PC-3 (cell line): ENCODE measurements at regions of chr21 and their contacts with region 1.

Region 1: DNA sequence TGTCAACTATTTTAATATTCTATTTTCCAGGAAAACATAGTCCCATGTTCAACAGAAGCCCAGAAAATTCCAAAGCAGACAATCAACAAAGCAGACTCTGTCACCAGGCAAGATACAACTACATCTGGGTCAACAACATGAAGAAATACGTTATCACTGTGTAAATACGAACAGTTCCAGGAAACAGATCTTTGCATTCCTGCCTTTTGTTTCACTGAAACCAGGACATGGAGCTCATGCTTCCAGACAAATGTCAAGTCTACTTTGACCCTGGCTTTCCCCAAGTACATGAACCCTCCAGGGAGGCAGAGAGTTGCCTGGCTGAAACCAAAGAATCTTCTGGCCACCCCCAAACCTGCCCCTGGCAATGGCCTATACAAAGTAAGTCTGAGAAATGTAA is 106.7 kb downstream of the SETD4 start:
- DNase-seq: peak; percentile 50
- ATAC-seq: peak; percentile 64
- H3K4me3 ChIP-seq: no peak overlapping the region
- H3K27ac ChIP-seq: no peak overlapping the region
- H3K4me1 ChIP-seq: peaks cover 6% of the 10 kb centered on the region; the same call in 1 of the 2 replicates
- H3K27me3 ChIP-seq: no peaks in the 10 kb centered on the region
- CTCF ChIP-seq: no peak

Region 2: GRCh38 chr21:35814858-35815619 is 138.6 kb before region 1 on chr21:
- CTCF ChIA-PET with region 1: no interaction called
- POLR2A ChIA-PET with region 1: no interaction called
- intact Hi-C with region 1: no loop called
- DNase-seq: peak; percentile 25
- ATAC-seq: no peak
- H3K4me3 ChIP-seq: no peak overlapping the region
- H3K27ac ChIP-seq: no peak overlapping the region
- H3K4me1 ChIP-seq: no peaks in the 10 kb centered on the region
- H3K27me3 ChIP-seq: no peaks in the 10 kb centered on the region
- CTCF ChIP-seq: no peak

Region 3: DNA sequence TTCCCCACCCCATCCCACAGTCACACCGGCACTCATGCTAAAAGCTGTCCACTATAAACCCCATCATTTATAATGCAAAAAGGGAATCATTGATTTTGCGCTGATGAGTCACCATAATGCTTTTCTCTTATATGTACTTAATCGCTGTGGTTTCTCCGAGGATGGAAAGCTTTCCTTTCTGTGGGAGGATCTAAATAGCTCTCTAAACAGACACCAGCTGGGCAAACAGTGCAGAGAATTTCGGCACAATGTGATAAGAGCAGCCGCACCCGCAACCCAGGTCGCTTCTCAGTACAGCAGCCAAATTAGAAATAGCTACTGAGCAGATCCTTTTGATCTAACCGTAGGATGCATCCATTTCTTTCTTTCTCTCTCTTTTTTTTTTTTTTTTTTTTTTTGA is 21.2 kb after region 1 on chr21:
- CTCF ChIA-PET with region 1: no interaction called
- POLR2A ChIA-PET with region 1: no interaction called
- intact Hi-C with region 1: loop called (anchors 1 kb)
- DNase-seq: peak; percentile 90
- ATAC-seq: peak; percentile 99
- H3K4me3 ChIP-seq: no peak overlapping the region
- H3K27ac ChIP-seq: no peak overlapping the region
- H3K4me1 ChIP-seq: peaks cover 15% of the 10 kb centered on the region; the same call in 1 of the 2 replicates
- H3K27me3 ChIP-seq: no peaks in the 10 kb centered on the region
- CTCF ChIP-seq: no peak